ENCODE measurements at regions of chr16 and their contacts with region 1.

Region 1: DNA sequence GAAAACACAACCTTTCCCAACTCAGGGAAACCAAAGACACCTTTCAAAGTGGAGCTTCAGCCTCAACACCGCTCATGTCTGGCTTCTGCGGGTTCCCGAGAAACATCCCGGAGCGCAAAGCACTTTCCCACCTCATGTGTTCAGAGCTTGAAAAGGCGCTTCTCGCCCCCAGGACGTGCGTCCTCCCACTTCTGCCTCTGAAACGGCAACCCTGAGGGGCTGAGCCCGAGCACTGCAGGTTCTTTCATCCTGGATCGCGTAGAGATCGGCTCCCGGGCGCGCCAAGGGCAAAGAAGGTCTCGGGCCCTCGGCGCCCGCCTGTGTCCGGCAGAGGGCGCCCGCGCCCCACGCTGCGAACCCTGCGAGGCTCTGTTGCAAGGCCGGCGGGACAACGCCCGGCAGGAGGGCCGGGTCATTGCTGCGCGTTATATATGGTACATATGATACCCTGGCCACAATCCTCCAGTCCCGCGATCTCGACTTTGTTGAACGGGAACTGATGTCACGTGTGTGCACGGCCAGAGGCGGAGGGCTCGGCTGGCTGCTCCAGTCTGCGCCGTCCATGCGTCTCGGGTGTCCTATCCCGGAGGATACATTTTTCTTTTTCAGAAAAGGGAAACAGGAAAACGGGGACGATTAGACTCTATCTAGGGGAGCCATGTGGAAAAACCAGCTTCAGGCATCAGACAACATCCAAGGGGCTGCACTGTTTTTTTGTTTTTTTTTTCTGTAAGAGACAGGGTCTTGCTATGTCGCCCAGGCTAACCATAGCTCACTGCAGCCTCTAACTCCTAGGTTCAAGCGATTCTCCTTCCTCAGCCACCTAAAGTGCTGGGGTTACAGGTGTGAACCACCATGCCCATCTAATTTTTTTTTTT is 19.1 kb downstream of the COQ7 start:
- DNase-seq: peak; percentile 77 to 87
- ATAC-seq: peak; percentile 94 to 98 (median 98)
- H3K4me3 ChIP-seq: no peak overlapping the region
- H3K4me3 Mint-ChIP-seq: peak overlapping the region; percentile 59
- H3K27ac ChIP-seq: no peak overlapping the region
- H3K27ac Mint-ChIP-seq: no peak overlapping the region
- H3K4me1 ChIP-seq: peaks cover 10% of the 10 kb centered on the region
- H3K4me1 Mint-ChIP-seq: peaks cover 0 to 7% of the 10 kb centered on the region in 2 donors
- H3K27me3 ChIP-seq: peaks cover 8% of the 10 kb centered on the region
- H3K27me3 Mint-ChIP-seq: peaks cover 3 to 13% of the 10 kb centered on the region in 2 donors
- CTCF ChIP-seq: peak; percentile 99

Region 2: GRCh38 chr16:19062706-19063105 is 23.9 kb before region 1 on chr16:
- intact Hi-C with region 1: no loop called
- DNase-seq: no peak
- ATAC-seq: no peak
- H3K4me3 ChIP-seq: no peak overlapping the region
- H3K4me3 Mint-ChIP-seq: no peak overlapping the region
- H3K27ac ChIP-seq: no peak overlapping the region
- H3K27ac Mint-ChIP-seq: no peak overlapping the region
- H3K4me1 ChIP-seq: peaks cover 5% of the 10 kb centered on the region
- H3K4me1 Mint-ChIP-seq: peaks cover 7 to 11% of the 10 kb centered on the region in 2 donors
- H3K27me3 ChIP-seq: no peaks in the 10 kb centered on the region
- H3K27me3 Mint-ChIP-seq: peaks cover 0 to 9% of the 10 kb centered on the region in 2 donors
- CTCF ChIP-seq: no peak

Region 3: GRCh38 chr16:19179546-19180490 is 93.3 kb after region 1 on chr16:
- intact Hi-C with region 1: loop called (anchors 2 kb)
- DNase-seq: peak; percentile 27 to 58
- ATAC-seq: peak in 1 of 3 donors; percentile 51
- H3K4me3 ChIP-seq: no peak overlapping the region
- H3K4me3 Mint-ChIP-seq: no peak overlapping the region
- H3K27ac ChIP-seq: no peak overlapping the region
- H3K27ac Mint-ChIP-seq: no peak overlapping the region
- H3K4me1 ChIP-seq: peaks cover 2% of the 10 kb centered on the region
- H3K4me1 Mint-ChIP-seq: no peaks in the 10 kb centered on the region
- H3K27me3 ChIP-seq: no peaks in the 10 kb centered on the region
- H3K27me3 Mint-ChIP-seq: peaks cover 0 to 16% of the 10 kb centered on the region in 2 donors
- CTCF ChIP-seq: peak; percentile 35

Region 4: DNA sequence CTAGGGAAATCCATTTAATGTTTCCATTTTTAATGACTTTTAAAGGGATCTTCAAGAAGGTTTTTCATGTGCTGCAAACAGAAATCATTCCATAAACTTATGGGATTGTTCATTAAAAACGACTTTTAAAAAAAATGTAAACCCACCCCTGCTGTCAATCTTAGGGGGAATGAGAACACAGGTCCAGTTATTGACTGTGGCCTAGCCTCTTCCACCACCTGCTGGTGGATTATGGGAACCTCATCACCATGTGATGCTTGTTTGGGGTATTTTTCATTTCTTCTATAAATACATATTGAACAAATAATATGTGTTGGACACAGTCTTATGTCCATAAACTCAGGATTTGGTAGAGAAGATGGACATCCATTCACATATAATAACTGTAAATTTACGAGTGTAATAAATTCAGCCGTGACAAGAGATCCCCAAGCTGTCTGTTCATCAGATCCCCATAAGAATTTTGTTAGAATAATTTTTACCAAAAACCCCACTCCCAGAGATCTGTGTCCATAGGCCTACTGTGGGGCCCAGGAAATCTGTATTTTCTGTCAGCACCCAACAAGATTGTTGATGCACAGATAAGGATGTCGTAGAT is 289.1 kb after region 1 on chr16:
- intact Hi-C with region 1: loop called (anchors 1 kb)
- DNase-seq: peak in 1 of 2 donors; percentile 58
- ATAC-seq: no peak
- H3K4me3 ChIP-seq: no peak overlapping the region
- H3K4me3 Mint-ChIP-seq: no peak overlapping the region
- H3K27ac ChIP-seq: no peak overlapping the region
- H3K27ac Mint-ChIP-seq: no peak overlapping the region
- H3K4me1 ChIP-seq: peaks cover 12% of the 10 kb centered on the region
- H3K4me1 Mint-ChIP-seq: no peaks in the 10 kb centered on the region
- H3K27me3 ChIP-seq: no peaks in the 10 kb centered on the region
- H3K27me3 Mint-ChIP-seq: no peaks in the 10 kb centered on the region
- CTCF ChIP-seq: peak; percentile 60

Region 5: DNA sequence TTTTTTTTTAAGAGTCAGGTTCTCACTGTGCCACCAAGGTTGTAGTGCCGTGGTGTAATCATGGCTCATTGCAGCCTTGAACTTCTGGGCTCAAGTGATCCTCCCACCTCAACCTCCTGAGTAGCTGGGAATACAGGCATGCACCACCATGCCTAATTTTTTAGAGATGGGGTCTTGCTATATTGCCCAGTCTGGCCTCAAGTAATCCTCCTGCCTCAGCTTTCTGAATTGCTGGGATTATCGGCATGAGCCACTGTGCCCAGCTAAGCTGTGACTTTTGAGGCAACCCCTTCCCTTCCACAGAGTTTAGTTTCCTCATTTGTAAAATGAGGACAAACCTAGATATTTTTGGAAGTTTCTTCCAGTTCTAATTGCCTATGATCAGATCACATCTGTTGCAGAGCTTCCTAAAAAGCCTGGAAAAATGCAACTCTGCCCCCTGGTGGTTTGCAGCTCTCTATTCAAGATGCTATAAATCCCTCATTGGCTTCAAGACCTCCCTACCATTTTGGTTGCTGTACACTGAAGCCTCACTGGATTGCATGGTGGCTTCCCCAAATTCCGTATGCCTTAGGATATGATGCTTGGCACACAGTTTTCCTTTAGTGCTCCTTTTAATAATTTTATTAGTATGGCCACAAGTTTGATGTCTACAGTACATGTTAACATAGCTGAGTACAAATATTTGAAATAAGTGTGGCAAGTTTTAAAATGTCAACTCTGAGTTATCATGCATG is 416.0 kb after region 1 on chr16:
- intact Hi-C with region 1: loop called (anchors 1 kb)
- DNase-seq: peak; percentile 36 to 80
- ATAC-seq: peak; percentile 53 to 64 (median 58)
- H3K4me3 ChIP-seq: no peak overlapping the region
- H3K4me3 Mint-ChIP-seq: no peak overlapping the region
- H3K27ac ChIP-seq: no peak overlapping the region
- H3K27ac Mint-ChIP-seq: no peak overlapping the region
- H3K4me1 ChIP-seq: no peaks in the 10 kb centered on the region
- H3K4me1 Mint-ChIP-seq: peaks cover 0 to 6% of the 10 kb centered on the region in 2 donors
- H3K27me3 ChIP-seq: no peaks in the 10 kb centered on the region
- H3K27me3 Mint-ChIP-seq: no peaks in the 10 kb centered on the region
- CTCF ChIP-seq: peak; percentile 68

Region 6: GRCh38 chr16:19886073-19886941 is 799.7 kb after region 1 on chr16:
- intact Hi-C with region 1: loop called (anchors 5 kb)
- DNase-seq: peak; percentile 55 to 90
- ATAC-seq: peak; percentile 51 to 72 (median 69)
- H3K4me3 ChIP-seq: no peak overlapping the region
- H3K4me3 Mint-ChIP-seq: peak overlapping the region; percentile 79
- H3K27ac ChIP-seq: no peak overlapping the region
- H3K27ac Mint-ChIP-seq: no peak overlapping the region
- H3K4me1 ChIP-seq: peaks cover 27% of the 10 kb centered on the region
- H3K4me1 Mint-ChIP-seq: peaks cover 15 to 23% of the 10 kb centered on the region in 2 donors
- H3K27me3 ChIP-seq: peaks cover 22% of the 10 kb centered on the region
- H3K27me3 Mint-ChIP-seq: peaks cover 30 to 32% of the 10 kb centered on the region in 2 donors
- CTCF ChIP-seq: peak; percentile 85

Measured in natural killer cell (primary cell).